T-cell (primary cell): ENCODE measurements at regions of chr17 and their contacts with region 1.

Region 1: GRCh38 chr17:4954916-4955470 is 4.1 kb downstream of the ENO3 start:
- DNase-seq: no peak
- ATAC-seq: no peak
- H3K4me3 ChIP-seq: no peak overlapping the region
- H3K4me3 Mint-ChIP-seq: no peak overlapping the region
- H3K27ac ChIP-seq: no peak overlapping the region
- H3K27ac Mint-ChIP-seq: no peak overlapping the region
- H3K4me1 ChIP-seq: peaks cover 0 to 16% of the 10 kb centered on the region in 2 experiments
- H3K4me1 Mint-ChIP-seq: peaks cover 20 to 25% (median 21%) of the 10 kb centered on the region in 3 donors
- H3K27me3 ChIP-seq: no peaks in the 10 kb centered on the region
- H3K27me3 Mint-ChIP-seq: no peaks in the 10 kb centered on the region

Region 2: DNA sequence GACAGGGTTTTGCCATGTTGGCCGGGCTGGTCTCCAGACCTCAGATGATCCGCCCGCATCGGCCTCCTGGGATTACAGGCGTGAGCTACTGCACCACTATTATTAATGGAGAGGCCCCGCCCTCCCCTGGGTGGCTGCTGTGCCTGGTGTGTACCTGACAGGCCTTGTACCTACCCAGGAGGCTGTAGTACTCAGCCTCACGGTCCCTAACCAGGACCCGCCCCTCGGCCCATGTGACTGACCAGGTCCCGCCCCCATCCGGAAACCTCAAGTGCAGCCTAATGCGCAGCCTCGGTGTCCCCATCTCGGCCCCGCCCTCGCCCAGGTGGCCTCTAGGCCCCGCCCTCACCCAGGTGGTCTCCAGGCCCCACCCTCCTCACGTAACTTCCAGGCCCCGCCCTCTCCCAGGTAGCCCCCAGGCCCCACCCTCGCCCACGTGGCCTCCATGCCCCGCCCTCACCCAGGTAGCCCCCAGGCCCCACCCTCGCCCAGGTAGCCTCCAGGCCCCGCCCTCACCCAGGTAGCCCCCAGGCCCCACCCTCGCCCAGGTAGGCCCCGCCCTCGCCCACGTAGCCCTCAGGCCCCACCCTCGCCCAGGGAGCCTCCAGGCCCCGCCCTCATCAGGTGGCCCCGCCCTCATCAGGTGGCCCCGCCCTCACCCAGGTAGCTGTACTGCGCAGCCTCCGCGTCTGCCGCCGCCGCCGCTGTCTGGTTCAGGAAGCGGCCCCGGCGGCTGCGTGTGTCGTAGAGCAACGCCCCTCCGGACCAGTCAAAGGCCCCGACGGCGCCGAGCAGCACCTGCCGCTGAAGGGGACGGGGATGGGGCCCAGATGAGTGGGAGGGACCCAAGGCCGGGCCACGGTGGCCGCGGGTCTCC is 1200.3 kb before region 1 on chr17:
- CTCF ChIA-PET with region 1: no interaction called
- POLR2A ChIA-PET with region 1: interaction called in 1 of 2 experiments, 12 read pairs
- DNase-seq: peak; percentile 50 to 91 (median 80)
- ATAC-seq: peak; percentile 82 to 88 (median 86)
- H3K4me3 ChIP-seq: peak overlapping the region; percentile 11 to 28
- H3K4me3 Mint-ChIP-seq: peak overlapping the region in 1 of 3 donors; percentile 46
- H3K27ac ChIP-seq: peak overlapping the region; percentile 62
- H3K27ac Mint-ChIP-seq: peak overlapping the region in 1 of 2 donors; percentile 55
- H3K4me1 ChIP-seq: peaks cover 15 to 45% of the 10 kb centered on the region in 2 experiments
- H3K4me1 Mint-ChIP-seq: peaks cover 22 to 38% (median 33%) of the 10 kb centered on the region in 3 donors
- H3K27me3 ChIP-seq: no peaks in the 10 kb centered on the region
- H3K27me3 Mint-ChIP-seq: no peaks in the 10 kb centered on the region

Region 3: GRCh38 chr17:4796553-4796921 is 158.5 kb before region 1 on chr17:
- CTCF ChIA-PET with region 1: no interaction called
- POLR2A ChIA-PET with region 1: no interaction called
- DNase-seq: peak in 1 of 35 experiments; percentile 22
- ATAC-seq: no peak
- H3K4me3 ChIP-seq: peak overlapping the region; percentile 70
- H3K4me3 Mint-ChIP-seq: peak overlapping the region; percentile 94 to 100 (median 100)
- H3K27ac ChIP-seq: peak overlapping the region; percentile 65
- H3K27ac Mint-ChIP-seq: peak overlapping the region; percentile 99
- H3K4me1 ChIP-seq: peaks cover 5 to 20% of the 10 kb centered on the region in 2 experiments
- H3K4me1 Mint-ChIP-seq: peaks cover 13 to 14% (median 13%) of the 10 kb centered on the region in 3 donors
- H3K27me3 ChIP-seq: no peaks in the 10 kb centered on the region
- H3K27me3 Mint-ChIP-seq: no peaks in the 10 kb centered on the region